ENCODE measurements at regions of chr10 and their contacts with region 1.

Region 1: DNA sequence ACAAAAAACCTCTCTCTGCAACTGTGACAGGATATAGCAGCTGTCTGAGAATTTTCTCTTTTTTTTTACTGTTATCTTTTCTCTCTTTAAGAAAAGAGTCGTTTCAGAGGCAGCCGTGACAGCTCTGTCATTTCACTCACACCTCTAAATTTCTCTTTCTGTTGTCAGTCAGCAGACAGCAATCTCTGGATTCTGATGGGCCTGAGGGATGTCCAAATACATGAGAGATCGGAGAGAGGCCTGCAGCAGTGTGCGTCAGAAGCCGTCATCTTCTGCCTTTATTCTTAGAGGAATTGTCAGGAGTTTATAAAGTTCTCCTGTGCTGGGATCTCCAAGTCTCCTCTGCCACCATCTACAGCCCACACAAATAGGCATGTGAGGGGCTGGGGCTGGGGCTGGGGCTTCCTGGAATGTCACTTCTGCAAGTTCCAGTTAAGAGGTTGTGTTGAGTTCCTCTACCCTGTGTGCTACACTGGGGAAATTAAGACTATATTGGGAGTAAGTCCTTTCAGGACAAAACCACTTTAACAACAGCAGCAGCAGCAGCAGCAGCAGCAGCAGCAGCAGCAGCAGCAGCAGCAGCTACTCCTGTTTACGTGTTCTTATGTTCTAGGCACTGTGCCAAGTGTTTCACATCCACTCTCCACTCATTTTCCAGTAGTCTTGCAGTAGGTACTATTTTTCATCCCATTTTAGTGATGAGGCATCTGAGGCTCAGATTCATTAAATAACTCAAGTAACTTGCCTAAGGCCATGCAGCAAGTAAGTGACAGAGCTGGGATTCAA is 541.3 kb downstream of the LRMDA start:
- DNase-seq: peak; percentile 58
- ATAC-seq: no peak
- H3K4me3 ChIP-seq: no peak overlapping the region
- H3K27ac ChIP-seq: no peak overlapping the region
- H3K4me1 ChIP-seq: 0 out of 2 replicates have a peak, but pooled peaks cover 7% of the 10 kb centered on the region
- H3K27me3 ChIP-seq: peaks cover 19% of the 10 kb centered on the region
- CTCF ChIP-seq: no peak

Region 2: DNA sequence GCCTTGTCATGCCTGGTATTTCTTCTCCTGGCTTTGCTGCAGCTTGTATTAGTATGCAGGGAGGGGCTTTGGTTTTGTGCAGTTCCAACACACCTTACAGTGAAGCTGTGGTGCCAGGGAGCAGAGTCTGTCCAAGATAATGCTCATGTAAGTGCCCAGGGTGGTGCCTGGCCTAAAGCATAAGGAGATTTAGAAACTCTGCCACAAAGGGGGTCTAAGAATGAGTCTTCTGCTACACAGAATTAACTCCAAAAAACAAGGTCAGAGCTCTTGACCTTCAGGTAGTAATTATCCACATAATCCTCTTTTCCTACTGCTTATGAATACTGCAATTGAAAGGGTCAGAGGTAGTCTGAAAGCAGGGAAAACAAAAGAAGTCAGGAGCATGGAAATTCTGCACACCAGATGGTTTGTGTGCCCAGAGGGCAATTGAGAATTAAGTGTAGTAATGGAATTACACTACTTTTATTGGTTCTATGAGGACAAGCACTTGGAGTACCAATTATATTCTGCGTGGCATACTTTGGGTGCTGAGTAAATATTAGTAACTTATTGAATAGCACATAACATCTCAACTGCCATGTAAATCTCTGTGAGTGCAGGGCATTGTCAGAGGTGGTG is 1024.8 kb before region 1 on chr10:
- CTCF ChIA-PET with region 1: no interaction called
- POLR2A ChIA-PET with region 1: no interaction called
- intact Hi-C with region 1: no loop called
- DNase-seq: peak; percentile 99
- ATAC-seq: peak; percentile 87
- H3K4me3 ChIP-seq: no peak overlapping the region; the same call in 1 of the 2 replicates
- H3K27ac ChIP-seq: peak overlapping the region; percentile 54
- H3K4me1 ChIP-seq: peaks cover 43% of the 10 kb centered on the region
- H3K27me3 ChIP-seq: no peaks in the 10 kb centered on the region
- CTCF ChIP-seq: no peak

Region 3: DNA sequence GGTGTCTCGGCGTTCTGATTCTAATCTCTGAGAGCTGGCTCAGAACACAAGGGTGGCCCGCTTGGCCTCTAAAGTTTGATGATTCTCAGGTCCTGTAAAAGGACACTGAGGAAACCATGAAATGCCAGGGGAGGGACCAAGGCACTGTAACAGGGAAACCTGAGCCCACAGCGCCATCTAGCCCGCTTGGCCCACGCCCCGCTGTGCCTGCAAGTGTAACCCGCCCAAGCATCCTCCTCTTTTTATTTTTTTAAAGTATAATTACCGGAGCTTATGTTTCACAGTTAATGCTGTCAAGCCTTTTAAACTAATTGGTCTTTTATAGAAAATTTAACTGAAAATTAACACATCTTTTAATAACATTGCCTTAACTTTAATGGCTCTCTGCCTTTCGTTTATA is 930.3 kb after region 1 on chr10:
- CTCF ChIA-PET with region 1: no interaction called
- POLR2A ChIA-PET with region 1: interaction called, 14 read pairs
- intact Hi-C with region 1: no loop called
- DNase-seq: peak; percentile 74
- ATAC-seq: peak; percentile 79
- H3K4me3 ChIP-seq: no peak overlapping the region
- H3K27ac ChIP-seq: no peak overlapping the region
- H3K4me1 ChIP-seq: no peaks in the 10 kb centered on the region
- H3K27me3 ChIP-seq: no peaks in the 10 kb centered on the region
- CTCF ChIP-seq: peak; percentile 95